Activated CD4-positive, alpha-beta memory T cell treated with anti-CD3 and anti-CD28 coated beads, Interleukin-2, amount 10 ng/mL, durations not matched to agents 7 days and 5 days (primary cell): ENCODE measurements at regions of chr11 and their contacts with region 1.

Region 1: GRCh38 chr11:117426269-117426685 is 98.6 kb downstream of the CEP164 start:
- DNase-seq: peak; percentile 68
- H3K4me3 Mint-ChIP-seq: no peak overlapping the region
- H3K27ac Mint-ChIP-seq: no peak overlapping the region
- H3K4me1 Mint-ChIP-seq: peaks cover 2% of the 10 kb centered on the region
- H3K27me3 Mint-ChIP-seq: peaks cover 9% of the 10 kb centered on the region

Region 2: GRCh38 chr11:117409511-117409910 is 16.8 kb before region 1 on chr11:
- CTCF ChIA-PET with region 1: interaction called, 29 read pairs
- POLR2A ChIA-PET with region 1: no interaction called
- DNase-seq: no peak
- H3K4me3 Mint-ChIP-seq: no peak overlapping the region
- H3K27ac Mint-ChIP-seq: no peak overlapping the region
- H3K4me1 Mint-ChIP-seq: no peaks in the 10 kb centered on the region
- H3K27me3 Mint-ChIP-seq: no peaks in the 10 kb centered on the region

Region 3: GRCh38 chr11:117415358-117415896 is 10.8 kb before region 1 on chr11:
- CTCF ChIA-PET with region 1: interaction called, 29 read pairs
- POLR2A ChIA-PET with region 1: interaction called, 3 read pairs
- DNase-seq: no peak
- H3K4me3 Mint-ChIP-seq: no peak overlapping the region
- H3K27ac Mint-ChIP-seq: no peak overlapping the region
- H3K4me1 Mint-ChIP-seq: no peaks in the 10 kb centered on the region
- H3K27me3 Mint-ChIP-seq: no peaks in the 10 kb centered on the region

Region 4: DNA sequence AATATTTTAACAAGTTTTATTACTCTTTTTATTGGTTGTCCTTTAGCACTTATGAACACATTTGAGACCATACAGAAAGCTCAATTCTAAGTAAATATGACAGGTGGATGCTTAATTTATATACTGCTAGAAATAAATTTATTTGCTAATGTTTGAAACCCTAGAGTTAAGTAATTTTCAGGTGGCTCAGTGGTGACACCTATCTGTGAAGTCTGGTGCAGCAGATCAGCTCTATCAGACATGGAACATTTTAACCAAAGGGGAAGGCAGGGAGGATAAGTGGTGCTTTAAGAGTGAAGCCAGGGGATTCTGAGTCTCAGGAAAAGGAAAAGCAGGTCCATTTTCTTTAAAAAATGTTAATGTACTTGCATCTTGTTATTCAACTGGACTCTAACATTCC is 194.9 kb after region 1 on chr11:
- CTCF ChIA-PET with region 1: interaction called, 74 read pairs
- POLR2A ChIA-PET with region 1: no interaction called
- DNase-seq: no peak
- H3K4me3 Mint-ChIP-seq: no peak overlapping the region
- H3K27ac Mint-ChIP-seq: no peak overlapping the region
- H3K4me1 Mint-ChIP-seq: no peaks in the 10 kb centered on the region
- H3K27me3 Mint-ChIP-seq: peaks cover 19% of the 10 kb centered on the region

Region 5: GRCh38 chr11:117817368-117818040 is 391.2 kb after region 1 on chr11:
- CTCF ChIA-PET with region 1: interaction called, 35 read pairs
- POLR2A ChIA-PET with region 1: interaction called, 3 read pairs
- DNase-seq: peak; percentile 89
- H3K4me3 Mint-ChIP-seq: no peak overlapping the region
- H3K27ac Mint-ChIP-seq: peak overlapping the region; percentile 73
- H3K4me1 Mint-ChIP-seq: peaks cover 65% of the 10 kb centered on the region
- H3K27me3 Mint-ChIP-seq: no peaks in the 10 kb centered on the region